ENCODE measurements at regions of chr12 and their contacts with region 1.

Region 1: GRCh38 chr12:130555628-130556485 is 160.2 kb downstream of the RIMBP2 start:
- DNase-seq: no peak
- H3K4me3 ChIP-seq: no peak overlapping the region
- H3K27ac ChIP-seq: no peak overlapping the region
- H3K4me1 ChIP-seq: no peaks in the 10 kb centered on the region
- H3K27me3 ChIP-seq: no peaks in the 10 kb centered on the region
- CTCF ChIP-seq: no peak

Region 2: DNA sequence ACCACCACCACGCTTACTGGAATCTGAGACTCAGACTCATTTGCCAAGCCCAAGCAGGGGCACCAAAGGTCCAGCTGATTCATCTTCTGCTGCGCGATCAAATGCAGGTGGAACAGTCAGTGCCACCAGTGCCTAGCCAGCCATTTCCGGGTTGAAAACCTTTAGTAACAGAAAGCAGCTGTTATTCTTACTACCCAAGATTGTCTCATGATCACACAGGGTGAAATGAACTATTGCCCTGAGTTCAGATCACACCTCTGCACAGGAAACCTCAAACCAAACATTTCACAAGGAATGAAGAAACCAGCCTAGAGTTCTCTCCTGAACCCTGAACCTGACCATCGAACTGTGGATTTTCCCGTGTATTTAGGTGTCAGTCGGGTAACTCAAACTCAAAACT is 71.3 kb after region 1 on chr12:
- CTCF ChIA-PET with region 1: no interaction called
- dilution Hi-C with region 1: loop called (anchors 5 kb)
- in situ Hi-C with region 1: no loop called
- intact Hi-C with region 1: no loop called
- DNase-seq: no peak
- H3K4me3 ChIP-seq: no peak overlapping the region
- H3K27ac ChIP-seq: no peak overlapping the region
- H3K4me1 ChIP-seq: no peaks in the 10 kb centered on the region
- H3K27me3 ChIP-seq: no peaks in the 10 kb centered on the region
- CTCF ChIP-seq: no peak